Activated naive CD4-positive, alpha-beta T cell treated with anti-CD3 and anti-CD28 coated beads, Interleukin-2, amount 10 ng/mL, durations not matched to agents 7 days and 5 days (primary cell): ENCODE measurements at regions of chr10 and their contacts with region 1.

Region 1: DNA sequence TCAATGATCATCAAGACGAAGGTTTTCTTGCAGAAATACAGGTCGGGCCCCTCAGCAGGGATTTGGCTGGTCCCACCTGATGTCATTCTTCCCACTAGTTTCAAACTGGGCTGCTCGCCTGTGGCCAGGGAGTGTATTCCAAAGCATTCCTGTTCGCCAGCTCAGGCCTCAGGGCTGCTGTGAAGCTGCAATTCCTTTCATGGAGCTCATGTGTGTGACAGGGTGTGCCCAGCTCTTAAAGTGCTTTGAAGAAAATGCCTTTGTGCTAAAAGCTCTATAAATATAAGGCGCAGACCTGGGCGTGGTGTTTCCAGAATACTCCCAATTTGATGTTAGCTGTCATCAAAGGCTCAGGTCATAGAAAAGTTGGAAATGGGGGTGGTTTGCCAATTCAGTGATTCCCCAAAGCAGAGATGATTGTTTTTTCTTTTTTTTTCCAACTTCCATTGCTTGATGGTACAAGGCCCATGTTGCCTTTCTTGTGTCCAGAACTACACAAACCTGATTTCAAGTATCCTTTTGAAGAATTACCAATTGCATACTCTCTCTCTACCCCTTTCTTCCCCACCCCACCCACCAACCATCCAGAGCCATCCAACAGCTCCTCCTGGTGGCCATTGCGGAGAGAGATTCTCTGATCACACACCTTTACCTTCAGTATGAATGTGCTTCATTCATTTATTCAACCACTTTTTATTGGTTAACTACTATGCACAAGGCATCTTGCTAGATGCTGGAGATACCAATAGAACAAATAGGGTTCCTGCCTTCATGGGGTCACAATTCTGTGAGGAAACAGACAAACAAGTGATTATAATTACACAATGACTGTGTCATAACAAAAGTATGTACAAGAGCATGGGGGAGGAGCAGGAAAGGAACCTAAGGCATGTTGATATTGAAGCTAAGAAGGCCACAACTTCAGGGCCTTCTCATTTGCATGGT is 297.3 kb upstream of the LYZL1 start:
- DNase-seq: peak; percentile 54
- H3K4me3 Mint-ChIP-seq: no peak overlapping the region
- H3K27ac Mint-ChIP-seq: no peak overlapping the region
- H3K4me1 Mint-ChIP-seq: no peaks in the 10 kb centered on the region
- H3K27me3 Mint-ChIP-seq: no peaks in the 10 kb centered on the region

Region 2: DNA sequence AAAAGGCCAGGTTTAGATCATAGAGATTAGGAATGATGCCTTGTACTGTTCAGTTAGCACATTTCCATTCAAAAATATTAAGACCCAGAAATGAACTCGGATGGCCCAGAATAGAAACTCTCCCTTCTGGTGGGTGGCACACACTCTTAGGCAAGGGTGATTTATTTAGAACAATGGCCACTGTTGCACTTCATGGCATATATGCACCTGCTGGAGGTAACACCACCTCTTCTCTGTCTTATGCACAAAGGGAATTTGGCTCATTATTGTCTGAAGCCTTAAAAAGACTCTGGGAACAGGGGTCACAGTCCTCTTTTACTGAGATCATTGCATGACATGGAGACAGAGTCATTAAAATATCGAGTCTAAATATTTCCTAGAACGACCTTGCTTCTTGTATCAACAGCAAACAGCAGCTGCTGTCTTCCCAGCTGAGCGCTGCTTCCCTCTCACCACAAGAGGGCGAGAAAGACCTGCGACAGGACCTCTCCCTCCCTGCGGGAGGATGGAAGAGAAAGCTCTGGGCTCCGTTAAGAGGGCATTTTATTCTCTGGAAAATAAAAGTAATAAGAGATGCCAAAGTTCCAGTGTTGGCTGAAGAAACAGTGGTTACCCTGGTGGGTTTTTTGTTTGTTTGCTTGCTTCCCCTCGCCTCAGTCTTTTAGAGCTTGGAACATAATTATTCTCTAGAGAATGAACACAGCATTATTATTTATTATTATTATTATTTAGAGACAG is 327.9 kb before region 1 on chr10:
- CTCF ChIA-PET with region 1: interaction called, 27 read pairs
- DNase-seq: peak; percentile 81
- H3K4me3 Mint-ChIP-seq: no peak overlapping the region
- H3K27ac Mint-ChIP-seq: no peak overlapping the region
- H3K4me1 Mint-ChIP-seq: peaks cover 7% of the 10 kb centered on the region
- H3K27me3 Mint-ChIP-seq: peaks cover 58% of the 10 kb centered on the region